HepG2 (cell line): ENCODE measurements at regions of chr12 and their contacts with region 1.

Region 1: GRCh38 chr12:124480469-124481256 is 86.7 kb downstream of the NCOR2 start:
- DNase-seq: peak; percentile 71
- ATAC-seq: peak; percentile 68
- H3K4me3 ChIP-seq: peak overlapping the region in 1 of 3 experiments; percentile 32; a peak in 1 of 6 replicates
- H3K27ac ChIP-seq: peak overlapping the region; percentile 71
- H3K4me1 ChIP-seq: peaks cover 33% of the 10 kb centered on the region
- H3K27me3 ChIP-seq: no peaks in the 10 kb centered on the region
- CTCF ChIP-seq: no peak
- EP300 ChIP-seq: no peak
- POLR2A ChIP-seq: no peak
- RAD21 ChIP-seq: no peak

Region 2: GRCh38 chr12:124213666-124214347 is 266.9 kb before region 1 on chr12:
- CTCF ChIA-PET with region 1: no interaction called
- POLR2A ChIA-PET with region 1: no interaction called
- in situ Hi-C with region 1: no loop called
- intact Hi-C with region 1: no loop called
- DNase-seq: no peak
- ATAC-seq: no peak
- H3K4me3 ChIP-seq: no peak overlapping the region
- H3K27ac ChIP-seq: no peak overlapping the region
- H3K4me1 ChIP-seq: no peaks in the 10 kb centered on the region
- H3K27me3 ChIP-seq: peaks cover 0 to 3% of the 10 kb centered on the region in 2 experiments; a peak in 2 of 5 replicates
- CTCF ChIP-seq: no peak
- EP300 ChIP-seq: no peak
- POLR2A ChIP-seq: no peak
- RAD21 ChIP-seq: no peak

Region 3: DNA sequence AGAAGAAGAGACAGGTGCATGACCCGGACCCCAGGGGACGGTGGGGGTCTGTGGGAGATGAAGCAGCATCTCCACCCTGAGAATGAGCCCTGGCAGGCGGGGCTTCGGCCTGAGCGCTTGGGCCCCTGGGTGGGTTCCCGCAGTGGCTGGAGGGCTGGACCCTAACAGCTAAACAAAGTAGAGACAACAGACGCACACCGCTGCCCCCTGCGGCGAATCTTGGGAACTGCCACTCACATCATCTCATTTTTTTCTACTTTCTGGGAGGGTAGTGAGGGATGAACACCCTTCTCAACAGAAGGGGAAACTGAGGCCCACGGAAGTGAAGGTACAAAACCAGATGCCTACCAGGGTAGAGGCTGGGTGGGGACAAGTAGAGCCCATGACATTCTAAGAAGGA is 81.0 kb before region 1 on chr12:
- CTCF ChIA-PET with region 1: no interaction called
- POLR2A ChIA-PET with region 1: no interaction called
- in situ Hi-C with region 1: no loop called
- intact Hi-C with region 1: no loop called
- DNase-seq: peak; percentile 18
- ATAC-seq: peak; percentile 57
- H3K4me3 ChIP-seq: no peak overlapping the region
- H3K27ac ChIP-seq: no peak overlapping the region
- H3K4me1 ChIP-seq: no peaks in the 10 kb centered on the region
- H3K27me3 ChIP-seq: no peaks in the 10 kb centered on the region
- CTCF ChIP-seq: peak; percentile 78
- EP300 ChIP-seq: no peak
- POLR2A ChIP-seq: no peak
- RAD21 ChIP-seq: peak; percentile 55

Region 4: GRCh38 chr12:124518051-124518932 is 37.6 kb after region 1 on chr12:
- CTCF ChIA-PET with region 1: no interaction called
- POLR2A ChIA-PET with region 1: no interaction called
- in situ Hi-C with region 1: no loop called
- intact Hi-C with region 1: loop called (anchors 5 kb)
- DNase-seq: peak; percentile 93
- ATAC-seq: peak; percentile 95
- H3K4me3 ChIP-seq: peak overlapping the region; percentile 79 to 85 (median 83)
- H3K27ac ChIP-seq: peak overlapping the region; percentile 95
- H3K4me1 ChIP-seq: peaks cover 37% of the 10 kb centered on the region
- H3K27me3 ChIP-seq: no peaks in the 10 kb centered on the region
- CTCF ChIP-seq: no peak
- EP300 ChIP-seq: peak in 1 of 2 experiments; percentile 9; a peak in 1 of 4 replicates
- POLR2A ChIP-seq: peak in 1 of 2 experiments; percentile 61; a peak in 2 of 4 replicates
- RAD21 ChIP-seq: no peak